Activated CD8-positive, alpha-beta T cell treated with anti-CD3 and anti-CD28 coated beads for 36 hours (primary cell): ENCODE measurements at regions of chr3 and their contacts with region 1.

Region 1: DNA sequence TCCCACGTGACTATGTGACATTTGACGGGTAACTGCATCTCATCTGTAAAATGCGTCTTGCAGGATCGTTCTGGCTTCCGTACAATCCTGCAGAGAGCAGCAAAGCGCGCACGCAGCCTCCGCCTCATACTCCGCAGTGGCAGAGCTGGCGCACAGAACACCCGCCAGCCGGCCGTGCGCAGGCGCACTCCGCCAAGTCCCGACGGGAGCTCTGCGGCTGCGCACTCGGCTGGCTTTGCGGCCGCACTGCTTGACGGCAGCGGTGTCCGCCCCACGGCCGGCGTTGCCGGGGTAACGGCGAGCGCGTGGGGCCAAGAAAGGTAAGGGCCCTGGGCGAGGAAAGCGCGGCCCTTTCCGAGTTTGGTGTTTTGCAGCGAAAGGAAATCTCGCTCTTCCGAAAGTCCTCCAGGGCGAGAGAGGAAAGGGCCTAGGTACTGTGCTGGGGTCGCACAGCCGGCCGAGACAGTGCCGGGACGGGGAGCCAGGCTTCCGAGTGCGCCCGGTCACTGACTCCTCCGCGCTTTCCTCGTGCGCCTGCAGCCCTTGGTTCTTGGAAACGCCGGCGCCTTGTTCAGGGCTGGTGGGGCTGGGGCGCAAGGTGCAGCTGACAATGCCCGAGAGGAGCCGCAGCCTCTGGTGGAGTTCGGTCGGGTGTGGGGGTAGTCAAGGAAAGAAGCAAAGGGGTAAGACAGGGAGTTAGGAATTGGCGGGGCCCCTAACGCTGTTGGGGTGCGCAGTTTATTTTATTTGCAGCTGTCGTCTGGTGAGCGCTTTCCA is at the start of gene TSEN2:
- DNase-seq: peak; percentile 95
- ATAC-seq: peak; percentile 97
- H3K4me3 Mint-ChIP-seq: peak within 1 kb of the TSS; percentile 92
- H3K27ac Mint-ChIP-seq: peak within 1 kb of the TSS; percentile 93
- H3K4me1 Mint-ChIP-seq: peaks cover 37% of the 10 kb centered on the region
- H3K27me3 Mint-ChIP-seq: no peaks in the 10 kb centered on the region
- CTCF ChIP-seq: no peak
- total RNA-seq, gene TSEN2: 19.4 to 21.4 TPM

Region 2: DNA sequence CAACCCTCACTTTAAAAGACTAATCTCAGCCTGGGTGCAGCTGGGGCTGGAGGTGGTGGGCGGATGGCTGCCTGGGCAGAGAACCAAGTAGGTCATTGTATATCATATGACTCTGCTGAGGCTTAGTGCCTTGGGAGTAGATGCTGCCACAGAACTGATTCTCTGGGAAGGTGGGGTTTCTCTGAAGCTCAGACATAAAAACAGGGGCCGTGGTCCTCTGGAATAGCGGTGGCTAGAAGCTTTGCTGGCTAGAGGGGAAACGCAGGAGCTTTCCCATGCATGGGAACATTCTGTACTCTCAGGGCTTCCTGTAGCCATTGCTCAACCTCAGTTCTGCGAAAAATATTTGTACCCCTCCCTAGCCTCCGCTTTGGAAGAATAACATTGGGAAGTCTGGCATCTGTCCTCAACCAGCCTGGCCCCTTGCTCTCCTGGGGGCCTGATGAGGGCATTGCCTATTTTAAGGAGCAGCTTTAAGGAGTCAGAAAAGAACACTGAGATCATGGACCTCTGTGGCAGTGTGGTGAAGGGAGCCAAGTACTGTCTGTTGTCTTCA is 340.4 kb before region 1 on chr3:
- CTCF ChIA-PET with region 1: interaction called, 170 read pairs
- POLR2A ChIA-PET with region 1: interaction called, 3 read pairs
- intact Hi-C with region 1: no loop called
- DNase-seq: no peak
- ATAC-seq: no peak
- H3K4me3 Mint-ChIP-seq: no peak overlapping the region
- H3K27ac Mint-ChIP-seq: no peak overlapping the region
- H3K4me1 Mint-ChIP-seq: no peaks in the 10 kb centered on the region
- H3K27me3 Mint-ChIP-seq: peaks cover 7% of the 10 kb centered on the region
- CTCF ChIP-seq: no peak

Region 3: DNA sequence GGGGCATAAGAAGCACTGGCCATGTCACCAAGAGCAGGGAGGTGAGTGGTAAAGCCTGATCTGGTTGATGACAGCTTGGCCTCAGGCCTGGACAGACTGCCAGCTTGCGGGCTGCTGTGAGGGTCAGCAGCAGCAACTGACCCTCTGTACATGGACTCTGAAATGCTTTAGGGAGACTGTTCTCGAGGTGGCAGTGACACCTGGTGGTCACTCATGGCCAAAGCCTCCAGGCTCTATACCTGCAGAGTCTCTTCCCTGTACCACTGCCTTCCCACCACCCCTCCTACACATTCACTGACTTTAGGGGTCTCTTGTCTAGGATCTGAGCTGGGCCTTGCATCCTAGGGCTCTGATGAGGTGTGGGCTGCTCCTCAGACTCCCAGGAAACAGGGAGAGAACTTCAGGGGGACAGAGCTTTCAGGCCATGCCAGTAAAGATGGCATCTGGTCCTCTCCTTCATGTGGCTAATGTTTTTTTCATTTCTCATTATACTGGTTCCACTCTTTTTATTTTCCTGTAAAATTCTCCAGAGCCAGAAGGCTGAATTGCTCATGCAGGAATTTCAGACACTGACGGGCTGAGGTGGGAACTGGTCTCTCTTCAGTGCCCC is 308.4 kb before region 1 on chr3:
- CTCF ChIA-PET with region 1: interaction called, 25 read pairs
- POLR2A ChIA-PET with region 1: no interaction called
- intact Hi-C with region 1: no loop called
- DNase-seq: peak; percentile 68
- ATAC-seq: peak; percentile 68
- H3K4me3 Mint-ChIP-seq: no peak overlapping the region
- H3K27ac Mint-ChIP-seq: no peak overlapping the region
- H3K4me1 Mint-ChIP-seq: peaks cover 14% of the 10 kb centered on the region
- H3K27me3 Mint-ChIP-seq: peaks cover 1% of the 10 kb centered on the region
- CTCF ChIP-seq: peak; percentile 78

Region 4: DNA sequence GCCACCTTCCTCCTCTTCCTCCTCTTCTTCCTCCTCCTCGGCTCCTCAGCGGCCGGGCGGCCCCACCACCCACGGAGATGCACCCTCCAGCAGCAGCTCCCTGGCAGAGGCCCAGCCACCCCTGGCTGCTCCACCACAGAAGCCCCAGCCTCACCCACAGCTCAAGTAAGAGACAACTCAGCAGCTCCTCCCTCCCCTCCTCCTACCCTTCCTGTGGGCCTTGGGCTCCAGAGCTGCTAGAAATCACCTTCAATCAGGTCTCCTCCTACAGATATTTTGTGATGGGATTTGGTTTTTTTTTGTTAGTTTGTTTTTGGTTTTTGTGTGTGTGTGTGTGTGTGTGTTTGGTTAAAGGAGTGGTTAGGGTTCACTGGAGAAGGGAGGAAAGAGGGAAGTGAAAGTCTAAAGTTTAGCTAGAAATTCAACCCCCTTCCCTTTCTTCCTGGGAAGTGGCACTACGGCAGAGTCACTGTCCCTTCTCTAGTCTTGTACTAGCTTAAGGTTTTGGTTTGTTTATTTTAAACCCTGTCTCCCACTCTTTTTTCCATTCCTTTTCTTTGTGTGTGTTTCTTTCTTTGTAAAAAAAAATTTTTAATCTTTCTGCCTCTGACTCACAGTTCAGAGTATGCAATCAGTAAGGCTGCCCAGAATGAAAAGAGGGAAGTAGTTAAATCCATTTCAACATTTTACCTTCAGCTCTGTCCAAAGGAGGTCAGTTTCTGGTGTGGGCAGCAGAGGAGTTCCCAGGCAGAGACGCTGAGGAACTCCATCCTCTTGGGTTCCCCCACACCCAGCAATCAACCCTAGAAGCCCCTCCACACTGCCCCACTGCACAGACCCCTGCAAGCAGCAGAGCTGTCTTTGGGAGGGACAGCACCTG is 296.7 kb before region 1 on chr3:
- CTCF ChIA-PET with region 1: interaction called, 10 read pairs
- POLR2A ChIA-PET with region 1: interaction called, 3 read pairs
- intact Hi-C with region 1: no loop called
- DNase-seq: peak; percentile 94
- ATAC-seq: peak; percentile 95
- H3K4me3 Mint-ChIP-seq: peak overlapping the region; percentile 58
- H3K27ac Mint-ChIP-seq: peak overlapping the region; percentile 94
- H3K4me1 Mint-ChIP-seq: peaks cover 55% of the 10 kb centered on the region
- H3K27me3 Mint-ChIP-seq: no peaks in the 10 kb centered on the region
- CTCF ChIP-seq: no peak

Region 5: GRCh38 chr3:12462159-12462947 is 22.0 kb before region 1 on chr3:
- CTCF ChIA-PET with region 1: interaction called, 15 read pairs
- POLR2A ChIA-PET with region 1: no interaction called
- intact Hi-C with region 1: no loop called
- DNase-seq: peak; percentile 55
- ATAC-seq: peak; percentile 78
- H3K4me3 Mint-ChIP-seq: peak overlapping the region; percentile 13
- H3K27ac Mint-ChIP-seq: peak overlapping the region; percentile 82
- H3K4me1 Mint-ChIP-seq: peaks cover 19% of the 10 kb centered on the region
- H3K27me3 Mint-ChIP-seq: no peaks in the 10 kb centered on the region
- CTCF ChIP-seq: no peak

Region 6: DNA sequence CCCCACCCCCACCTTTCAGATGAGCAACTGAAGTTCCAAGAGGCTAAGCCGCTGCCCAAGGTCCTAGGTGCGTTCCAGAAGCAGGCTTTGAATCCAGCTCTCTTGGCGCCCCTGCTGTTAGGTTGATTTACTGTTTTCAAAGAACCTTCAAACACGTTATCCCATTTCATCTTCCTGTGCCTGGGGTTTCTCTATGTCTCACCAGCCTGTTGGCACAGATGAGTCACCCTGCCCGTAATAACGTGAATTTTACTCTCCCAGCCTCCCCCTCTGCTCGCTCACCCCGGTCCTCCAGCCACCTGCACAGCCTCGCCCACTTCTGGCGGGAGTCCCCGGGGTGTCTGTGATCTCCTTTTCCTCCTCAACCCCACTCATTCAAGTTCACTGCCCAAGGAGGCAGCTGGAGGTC is 13.1 kb before region 1 on chr3:
- CTCF ChIA-PET with region 1: interaction called, 24 read pairs
- POLR2A ChIA-PET with region 1: interaction called, 8 read pairs
- intact Hi-C with region 1: no loop called
- DNase-seq: peak; percentile 86
- ATAC-seq: peak; percentile 98
- H3K4me3 Mint-ChIP-seq: no peak overlapping the region
- H3K27ac Mint-ChIP-seq: peak overlapping the region; percentile 71
- H3K4me1 Mint-ChIP-seq: peaks cover 15% of the 10 kb centered on the region
- H3K27me3 Mint-ChIP-seq: no peaks in the 10 kb centered on the region
- CTCF ChIP-seq: peak; percentile 24

Region 7: GRCh38 chr3:12495749-12496452 is 11.5 kb after region 1 on chr3:
- CTCF ChIA-PET with region 1: interaction called, 8 read pairs
- POLR2A ChIA-PET with region 1: interaction called, 10 read pairs
- intact Hi-C with region 1: no loop called
- DNase-seq: no peak
- ATAC-seq: no peak
- H3K4me3 Mint-ChIP-seq: no peak overlapping the region
- H3K27ac Mint-ChIP-seq: no peak overlapping the region
- H3K4me1 Mint-ChIP-seq: no peaks in the 10 kb centered on the region
- H3K27me3 Mint-ChIP-seq: no peaks in the 10 kb centered on the region
- CTCF ChIP-seq: no peak